ENCODE measurements at regions of chr1 and their contacts with region 1.

Region 1: GRCh38 chr1:15994590-15995351 is 9.3 kb upstream of the SRARP start:
- DNase-seq: peak; percentile 60
- ATAC-seq: peak; percentile 96
- H3K4me3 ChIP-seq: no peak overlapping the region
- H3K27ac ChIP-seq: no peak overlapping the region
- H3K4me1 ChIP-seq: no peaks in the 10 kb centered on the region
- H3K27me3 ChIP-seq: no peaks in the 10 kb centered on the region
- CTCF ChIP-seq: peak; percentile 85 to 95 (median 95)
- POLR2A ChIP-seq: no peak
- RAD21 ChIP-seq: peak; percentile 95

Region 2: DNA sequence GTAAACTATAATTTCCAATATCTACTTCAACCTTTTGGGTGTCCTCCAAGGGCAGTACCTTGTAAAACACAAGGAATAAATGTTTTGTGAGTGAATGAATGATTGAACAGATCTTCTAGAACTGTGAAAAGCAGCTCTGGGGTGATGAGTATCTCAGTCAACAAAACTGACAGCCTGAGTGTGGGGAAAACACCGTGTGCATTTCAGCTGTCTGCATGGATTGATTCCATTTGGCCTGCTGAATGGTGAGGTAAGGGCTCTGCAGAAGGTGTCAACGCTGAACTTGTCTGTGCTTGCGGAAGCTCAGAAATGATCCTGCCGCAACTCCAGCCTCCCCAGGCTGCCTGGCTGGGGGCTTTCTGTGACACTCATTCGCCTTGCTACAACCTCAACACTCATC is 402.5 kb before region 1 on chr1:
- CTCF ChIA-PET with region 1: no interaction called
- POLR2A ChIA-PET with region 1: no interaction called
- RAD21 ChIA-PET with region 1: no interaction called
- intact Hi-C with region 1: loop called (anchors 5 kb)
- DNase-seq: no peak
- ATAC-seq: no peak
- H3K4me3 ChIP-seq: no peak overlapping the region
- H3K27ac ChIP-seq: no peak overlapping the region
- H3K4me1 ChIP-seq: no peaks in the 10 kb centered on the region
- H3K27me3 ChIP-seq: no peaks in the 10 kb centered on the region
- CTCF ChIP-seq: no peak
- POLR2A ChIP-seq: no peak
- RAD21 ChIP-seq: no peak

Region 3: GRCh38 chr1:15788624-15789301 is 206.0 kb before region 1 on chr1:
- CTCF ChIA-PET with region 1: interaction called, 15 read pairs
- POLR2A ChIA-PET with region 1: no interaction called
- RAD21 ChIA-PET with region 1: interaction called, 4 to 5 read pairs
- intact Hi-C with region 1: loop called (anchors 1 kb)
- DNase-seq: no peak
- ATAC-seq: peak; percentile 35
- H3K4me3 ChIP-seq: no peak overlapping the region
- H3K27ac ChIP-seq: peak overlapping the region; percentile 23
- H3K4me1 ChIP-seq: peaks cover 26 to 65% of the 10 kb centered on the region in 2 experiments
- H3K27me3 ChIP-seq: no peaks in the 10 kb centered on the region
- CTCF ChIP-seq: no peak
- POLR2A ChIP-seq: no peak
- RAD21 ChIP-seq: no peak

Region 4: GRCh38 chr1:15803354-15803753 is 191.4 kb before region 1 on chr1:
- CTCF ChIA-PET with region 1: interaction called, 7 read pairs
- POLR2A ChIA-PET with region 1: interaction called, 3 read pairs
- RAD21 ChIA-PET with region 1: interaction called in 1 of 2 experiments, 5 read pairs
- intact Hi-C with region 1: loop called (anchors 1 kb)
- DNase-seq: peak; percentile 58
- ATAC-seq: no peak
- H3K4me3 ChIP-seq: no peak overlapping the region
- H3K27ac ChIP-seq: no peak overlapping the region
- H3K4me1 ChIP-seq: peaks cover 40 to 53% of the 10 kb centered on the region in 2 experiments
- H3K27me3 ChIP-seq: no peaks in the 10 kb centered on the region
- CTCF ChIP-seq: peak in 2 of 3 experiments; percentile 53 to 59; a peak in 4 of 6 replicates
- POLR2A ChIP-seq: no peak
- RAD21 ChIP-seq: no peak

Region 5: DNA sequence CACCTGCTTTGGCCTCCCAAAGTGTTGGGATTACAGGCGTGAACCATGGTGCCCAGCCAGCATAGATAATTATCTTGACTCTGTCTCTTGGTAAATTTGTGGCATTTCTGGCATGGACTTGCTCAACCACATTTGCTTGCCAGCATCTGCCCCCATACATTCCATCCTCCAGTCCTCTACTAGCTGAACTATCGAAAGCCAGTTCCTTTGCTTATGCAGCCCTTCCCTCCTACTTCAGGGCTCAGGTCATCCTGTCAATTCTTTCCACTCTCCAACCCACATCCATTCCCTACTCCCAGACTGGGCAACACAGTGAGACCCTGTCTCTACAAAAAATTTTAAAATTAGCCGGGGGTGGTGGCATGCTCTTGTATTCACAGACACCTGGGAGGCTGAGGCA is 174.3 kb before region 1 on chr1:
- CTCF ChIA-PET with region 1: interaction called, 10 read pairs
- POLR2A ChIA-PET with region 1: no interaction called
- RAD21 ChIA-PET with region 1: no interaction called
- intact Hi-C with region 1: loop called (anchors 1 kb)
- DNase-seq: no peak
- ATAC-seq: peak; percentile 37; the same call in 1 of the 2 replicates
- H3K4me3 ChIP-seq: no peak overlapping the region
- H3K27ac ChIP-seq: no peak overlapping the region
- H3K4me1 ChIP-seq: peaks cover 5 to 11% of the 10 kb centered on the region in 2 experiments; a peak in 3 of 4 replicates
- H3K27me3 ChIP-seq: no peaks in the 10 kb centered on the region
- CTCF ChIP-seq: no peak
- POLR2A ChIP-seq: no peak
- RAD21 ChIP-seq: no peak